ENCODE measurements at regions of chrX and their contacts with region 1.

Region 1: GRCh38 chrX:46912098-46912602 is at the start of gene JADE3:
- DNase-seq: peak; percentile 78 to 86 (median 78)
- ATAC-seq: peak; percentile 90 to 97 (median 96)
- H3K4me3 ChIP-seq: peak within 1 kb of the TSS; percentile 30 to 93 (median 70)
- H3K27ac ChIP-seq: peak within 1 kb of the TSS; percentile 45 to 82 (median 74)
- H3K4me1 ChIP-seq: peaks cover 0 to 15% (median 0%) of the 10 kb centered on the region in 12 donors
- H3K27me3 ChIP-seq: peaks cover 0 to 13% (median 0%) of the 10 kb centered on the region in 9 donors
- CTCF ChIP-seq: peak in 1 of 12 donors; percentile 12
- POLR2A ChIP-seq: peak in 1 of 2 donors; percentile 46
- total RNA-seq, gene JADE3: 4.6 to 11.2 (median 6.1) TPM

Region 2: GRCh38 chrX:46978341-46979291 is 66.5 kb after region 1 on chrX:
- intact Hi-C with region 1: loop called in 5 of 10 experiments (anchors 2 to 5 kb)
- DNase-seq: peak; percentile 45 to 75 (median 63)
- ATAC-seq: peak in 3 of 4 donors; percentile 53 to 66 (median 59)
- H3K4me3 ChIP-seq: no peak overlapping the region
- H3K27ac ChIP-seq: no peak overlapping the region
- H3K4me1 ChIP-seq: peaks cover 0 to 5% (median 0%) of the 10 kb centered on the region in 12 donors
- H3K27me3 ChIP-seq: peaks cover 0 to 19% (median 0%) of the 10 kb centered on the region in 9 donors
- CTCF ChIP-seq: peak; percentile 39 to 73 (median 56)
- POLR2A ChIP-seq: no peak

Region 3: GRCh38 chrX:47093248-47093647 is 181.1 kb after region 1 on chrX:
- intact Hi-C with region 1: loop called in 1 of 10 experiments (anchors 5 kb)
- DNase-seq: no peak
- ATAC-seq: no peak
- H3K4me3 ChIP-seq: no peak overlapping the region
- H3K27ac ChIP-seq: no peak overlapping the region
- H3K4me1 ChIP-seq: no peaks in the 10 kb centered on the region
- H3K27me3 ChIP-seq: peaks cover 0 to 8% (median 0%) of the 10 kb centered on the region in 9 donors
- CTCF ChIP-seq: peak in 10 of 12 donors; percentile 10 to 53 (median 36)
- POLR2A ChIP-seq: no peak

Measured in heart left ventricle (tissue), 16 donors.